Uterus (tissue), 4 donors: ENCODE measurements at regions of chr12 and their contacts with region 1.

Region 1: GRCh38 chr12:3073438-3074250 is 3.5 kb upstream of the TSPAN9 start:
- DNase-seq: peak; percentile 86 to 88
- H3K4me3 ChIP-seq: no peak overlapping the region
- H3K27ac ChIP-seq: no peak overlapping the region
- H3K4me1 ChIP-seq: no peaks in the 10 kb centered on the region
- H3K27me3 ChIP-seq: no peaks in the 10 kb centered on the region
- CTCF ChIP-seq: peak; percentile 89 to 98 (median 95)
- POLR2A ChIP-seq: no peak

Region 2: DNA sequence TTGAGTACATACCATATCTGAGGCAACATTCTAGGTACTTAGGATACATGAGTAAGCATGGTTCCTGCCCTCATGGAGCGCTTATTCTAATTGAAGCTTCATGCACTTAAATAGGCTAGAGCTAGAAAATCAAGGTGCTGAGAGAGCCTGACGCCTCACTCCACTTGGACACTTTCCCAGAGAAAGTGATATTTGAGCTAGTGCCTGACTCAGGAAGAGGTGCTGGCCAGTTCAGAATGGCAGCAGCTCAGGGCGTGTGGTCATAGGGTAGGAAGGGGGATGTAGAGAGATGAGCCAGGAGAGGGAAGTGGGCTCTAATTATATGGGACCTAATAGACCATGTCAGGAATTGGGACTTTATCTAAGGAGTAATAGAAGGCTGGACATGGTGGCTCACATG is 149.6 kb before region 1 on chr12:
- intact Hi-C with region 1: no loop called
- DNase-seq: no peak
- H3K4me3 ChIP-seq: no peak overlapping the region
- H3K27ac ChIP-seq: no peak overlapping the region
- H3K4me1 ChIP-seq: no peaks in the 10 kb centered on the region
- H3K27me3 ChIP-seq: no peaks in the 10 kb centered on the region
- CTCF ChIP-seq: no peak
- POLR2A ChIP-seq: no peak

Region 3: GRCh38 chr12:2998789-2999264 is 74.8 kb before region 1 on chr12:
- intact Hi-C with region 1: no loop called
- DNase-seq: peak; percentile 86 to 93
- H3K4me3 ChIP-seq: no peak overlapping the region
- H3K27ac ChIP-seq: peak overlapping the region; percentile 86 to 91
- H3K4me1 ChIP-seq: no peaks in the 10 kb centered on the region
- H3K27me3 ChIP-seq: no peaks in the 10 kb centered on the region
- CTCF ChIP-seq: no peak
- POLR2A ChIP-seq: peak in 1 of 2 donors; percentile 46

Region 4: DNA sequence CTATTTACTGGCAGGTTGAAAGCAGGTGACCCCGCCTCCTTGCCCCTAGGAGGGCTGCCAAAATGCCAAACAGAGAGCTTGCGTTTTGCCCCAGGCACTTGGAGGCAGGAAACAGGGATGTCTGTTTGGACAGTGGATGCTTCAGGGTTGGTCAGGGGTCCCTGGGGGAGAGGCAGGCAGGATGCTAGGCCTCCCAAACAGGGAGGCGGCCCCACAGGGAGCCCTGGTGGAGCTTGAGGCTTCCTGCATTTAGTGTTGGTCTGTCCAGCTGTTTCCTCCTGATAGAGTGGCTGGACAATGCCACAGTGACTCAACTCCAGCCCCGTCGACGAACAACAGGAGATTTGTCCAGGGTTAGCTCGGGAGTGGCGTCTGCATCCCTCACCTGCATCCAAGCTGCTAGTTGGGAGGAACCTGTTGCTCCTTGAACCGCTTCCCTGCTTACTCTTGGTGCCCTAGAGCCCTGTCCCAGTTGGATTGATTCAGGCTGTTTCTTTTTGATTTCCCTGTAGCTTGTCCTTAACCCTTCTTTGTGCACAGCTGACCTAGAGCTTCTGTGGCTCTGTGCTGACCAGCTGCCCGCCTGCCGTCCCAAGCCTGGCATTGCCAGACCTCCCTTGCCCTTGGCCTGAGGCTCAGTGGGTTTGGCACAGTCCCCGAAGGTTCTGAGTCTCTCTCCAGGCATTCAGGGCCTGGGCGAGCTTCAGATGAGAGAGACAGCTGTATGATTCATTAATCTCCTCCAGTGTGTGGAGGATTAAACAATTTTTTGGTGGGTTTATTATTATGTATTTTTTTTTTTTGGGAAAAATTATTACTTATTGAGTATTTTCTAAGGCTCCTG is 49.4 kb after region 1 on chr12:
- intact Hi-C with region 1: no loop called
- DNase-seq: peak in 1 of 2 donors; percentile 74
- H3K4me3 ChIP-seq: no peak overlapping the region
- H3K27ac ChIP-seq: peak overlapping the region; percentile 49 to 55
- H3K4me1 ChIP-seq: peaks cover 0 to 15% of the 10 kb centered on the region in 2 donors
- H3K27me3 ChIP-seq: no peaks in the 10 kb centered on the region
- CTCF ChIP-seq: no peak
- POLR2A ChIP-seq: no peak

Region 5: DNA sequence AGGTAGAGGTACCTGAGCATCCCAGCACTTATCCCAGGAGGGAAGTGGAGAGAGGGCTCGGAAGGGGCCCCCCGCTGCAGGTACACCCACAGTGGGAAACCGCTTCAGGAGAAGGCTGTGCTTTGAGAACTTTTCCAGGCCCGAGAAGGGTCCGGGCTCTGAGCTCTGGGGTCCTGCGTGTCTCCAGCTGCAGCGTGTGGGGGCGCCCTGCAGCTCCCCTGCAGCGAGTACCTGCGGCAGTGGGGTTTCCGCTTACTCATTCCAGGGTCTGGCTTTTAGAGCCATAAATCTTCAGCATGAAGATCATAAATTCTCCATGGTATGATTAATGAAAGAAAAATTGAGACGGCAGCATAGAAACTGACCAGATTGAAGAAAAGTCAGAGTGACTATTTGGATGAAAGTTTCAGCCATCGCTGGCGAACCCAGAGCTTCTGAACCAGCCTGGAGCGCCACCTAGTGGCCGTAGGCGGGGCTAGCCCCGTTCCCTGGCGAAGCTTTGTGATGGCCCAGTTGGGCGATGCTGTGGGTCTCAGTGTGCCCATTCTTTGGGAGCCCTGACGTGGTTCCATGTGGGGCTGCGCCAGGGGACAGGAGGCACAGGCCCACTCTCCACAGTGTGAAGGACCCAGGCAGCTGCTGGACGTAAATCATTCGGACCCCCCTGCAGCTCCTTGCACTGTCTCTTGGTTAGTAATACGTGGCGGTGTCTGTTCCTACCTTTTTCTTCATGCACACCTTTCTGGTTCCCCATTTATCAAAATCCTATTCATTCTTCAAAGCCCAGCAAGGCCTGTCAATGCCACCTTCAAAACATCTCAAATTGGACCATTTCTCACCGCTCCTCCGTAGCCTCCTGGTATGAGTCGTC is 201.8 kb after region 1 on chr12:
- intact Hi-C with region 1: loop called (anchors 10 kb)
- DNase-seq: peak; percentile 77 to 82
- H3K4me3 ChIP-seq: no peak overlapping the region
- H3K27ac ChIP-seq: no peak overlapping the region
- H3K4me1 ChIP-seq: no peaks in the 10 kb centered on the region
- H3K27me3 ChIP-seq: no peaks in the 10 kb centered on the region
- CTCF ChIP-seq: peak; percentile 92 to 98 (median 94)
- POLR2A ChIP-seq: no peak